Naive thymus-derived CD4-positive, alpha-beta T cell (primary cell): ENCODE measurements at regions of chr14 and their contacts with region 1.

Region 1: GRCh38 chr14:61598980-61599379 is 96.3 kb upstream of the HIF1A start:
- DNase-seq: peak in 3 of 9 donors; percentile 10 to 15 (median 15)
- ATAC-seq: no peak
- H3K4me3 ChIP-seq: no peak overlapping the region
- H3K4me3 Mint-ChIP-seq: peak overlapping the region in 4 of 10 donors; percentile 27 to 55 (median 39)
- H3K27ac ChIP-seq: no peak overlapping the region
- H3K27ac Mint-ChIP-seq: peak overlapping the region in 3 of 9 donors; percentile 53 to 84 (median 71)
- H3K4me1 ChIP-seq: peaks cover 4 to 11% of the 10 kb centered on the region in 2 donors
- H3K4me1 Mint-ChIP-seq: peaks cover 16 to 42% (median 31%) of the 10 kb centered on the region in 7 donors
- H3K27me3 ChIP-seq: no peaks in the 10 kb centered on the region
- H3K27me3 Mint-ChIP-seq: no peaks in the 10 kb centered on the region

Region 2: GRCh38 chr14:61525293-61526011 is 73.5 kb before region 1 on chr14:
- CTCF ChIA-PET with region 1: no interaction called
- POLR2A ChIA-PET with region 1: no interaction called
- intact Hi-C with region 1: loop called in 1 of 2 experiments (anchors 5 kb)
- DNase-seq: peak in 1 of 9 donors; percentile 69
- ATAC-seq: peak; percentile 74
- H3K4me3 ChIP-seq: no peak overlapping the region
- H3K4me3 Mint-ChIP-seq: peak overlapping the region in 3 of 10 donors; percentile 2 to 73 (median 63)
- H3K27ac ChIP-seq: peak overlapping the region; percentile 34
- H3K27ac Mint-ChIP-seq: peak overlapping the region; percentile 69 to 90 (median 81)
- H3K4me1 ChIP-seq: peaks cover 22 to 68% of the 10 kb centered on the region in 2 donors
- H3K4me1 Mint-ChIP-seq: peaks cover 43 to 86% (median 73%) of the 10 kb centered on the region in 7 donors
- H3K27me3 ChIP-seq: no peaks in the 10 kb centered on the region
- H3K27me3 Mint-ChIP-seq: no peaks in the 10 kb centered on the region

Region 3: GRCh38 chr14:61561657-61562276 is 37.2 kb before region 1 on chr14:
- CTCF ChIA-PET with region 1: no interaction called
- POLR2A ChIA-PET with region 1: no interaction called
- intact Hi-C with region 1: no loop called
- DNase-seq: no peak
- ATAC-seq: no peak
- H3K4me3 ChIP-seq: no peak overlapping the region
- H3K4me3 Mint-ChIP-seq: peak overlapping the region in 1 of 10 donors; percentile 1
- H3K27ac ChIP-seq: no peak overlapping the region
- H3K27ac Mint-ChIP-seq: peak overlapping the region in 4 of 9 donors; percentile 10 to 48 (median 39)
- H3K4me1 ChIP-seq: no peaks in the 10 kb centered on the region
- H3K4me1 Mint-ChIP-seq: peaks cover 5 to 67% (median 18%) of the 10 kb centered on the region in 7 donors
- H3K27me3 ChIP-seq: no peaks in the 10 kb centered on the region
- H3K27me3 Mint-ChIP-seq: no peaks in the 10 kb centered on the region

Region 4: GRCh38 chr14:61573748-61574513 is 25.0 kb before region 1 on chr14:
- CTCF ChIA-PET with region 1: no interaction called
- POLR2A ChIA-PET with region 1: interaction called, 3 read pairs
- intact Hi-C with region 1: loop called in 1 of 2 experiments (anchors 2 kb)
- DNase-seq: peak in 6 of 9 donors; percentile 40 to 59 (median 52)
- ATAC-seq: peak; percentile 47
- H3K4me3 ChIP-seq: no peak overlapping the region
- H3K4me3 Mint-ChIP-seq: peak overlapping the region in 9 of 10 donors; percentile 12 to 61 (median 48)
- H3K27ac ChIP-seq: no peak overlapping the region
- H3K27ac Mint-ChIP-seq: peak overlapping the region in 5 of 9 donors; percentile 25 to 57 (median 53)
- H3K4me1 ChIP-seq: peaks cover 0 to 36% of the 10 kb centered on the region in 2 donors
- H3K4me1 Mint-ChIP-seq: peaks cover 39 to 84% (median 75%) of the 10 kb centered on the region in 7 donors
- H3K27me3 ChIP-seq: no peaks in the 10 kb centered on the region
- H3K27me3 Mint-ChIP-seq: peaks cover 0 to 24% (median 0%) of the 10 kb centered on the region in 5 donors

Region 5: DNA sequence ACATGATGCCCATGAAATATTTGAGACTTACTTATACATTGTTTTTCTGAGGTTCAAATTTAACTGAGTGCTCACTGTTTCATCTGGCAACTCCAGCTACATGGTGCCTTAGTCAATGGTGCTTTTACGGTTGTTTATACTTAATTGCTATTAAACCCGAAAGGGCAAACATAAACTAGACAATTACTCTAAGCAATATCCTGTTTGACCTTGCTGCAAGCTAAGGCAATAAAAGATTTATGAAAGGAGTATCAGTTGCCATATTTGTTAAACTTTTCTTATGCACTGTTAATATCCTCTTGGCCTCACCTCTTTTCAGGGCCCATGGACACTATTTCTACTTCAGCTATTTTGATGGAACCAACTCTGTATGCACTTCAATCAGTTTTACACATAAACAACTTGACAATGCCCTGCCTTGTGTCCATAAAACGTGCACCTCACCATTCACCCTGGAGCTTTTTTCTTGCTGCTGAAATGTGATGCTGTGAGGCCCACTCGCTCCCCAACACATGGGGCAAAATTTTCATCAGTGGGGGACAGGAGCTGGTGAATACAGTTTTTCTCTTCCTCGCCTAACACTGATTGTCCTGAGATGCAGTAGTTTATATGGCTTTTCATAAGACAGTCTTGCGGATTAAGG is 32.2 kb after region 1 on chr14:
- CTCF ChIA-PET with region 1: no interaction called
- POLR2A ChIA-PET with region 1: no interaction called
- intact Hi-C with region 1: loop called in 1 of 2 experiments (anchors 5 kb)
- DNase-seq: no peak
- ATAC-seq: no peak
- H3K4me3 ChIP-seq: no peak overlapping the region
- H3K4me3 Mint-ChIP-seq: peak overlapping the region in 1 of 10 donors; percentile 7
- H3K27ac ChIP-seq: no peak overlapping the region
- H3K27ac Mint-ChIP-seq: no peak overlapping the region
- H3K4me1 ChIP-seq: no peaks in the 10 kb centered on the region
- H3K4me1 Mint-ChIP-seq: peaks cover 0 to 15% (median 0%) of the 10 kb centered on the region in 7 donors
- H3K27me3 ChIP-seq: no peaks in the 10 kb centered on the region
- H3K27me3 Mint-ChIP-seq: no peaks in the 10 kb centered on the region

Region 6: GRCh38 chr14:61671082-61671481 is 72.1 kb after region 1 on chr14:
- CTCF ChIA-PET with region 1: no interaction called
- POLR2A ChIA-PET with region 1: no interaction called
- intact Hi-C with region 1: loop called in 1 of 2 experiments (anchors 2 kb)
- DNase-seq: peak in 7 of 9 donors; percentile 67 to 87 (median 82)
- ATAC-seq: peak; percentile 97
- H3K4me3 ChIP-seq: peak overlapping the region; percentile 24
- H3K4me3 Mint-ChIP-seq: peak overlapping the region in 1 of 10 donors; percentile 68
- H3K27ac ChIP-seq: peak overlapping the region; percentile 85
- H3K27ac Mint-ChIP-seq: no peak overlapping the region
- H3K4me1 ChIP-seq: peaks cover 29 to 66% of the 10 kb centered on the region in 2 donors
- H3K4me1 Mint-ChIP-seq: peaks cover 5 to 23% (median 18%) of the 10 kb centered on the region in 7 donors
- H3K27me3 ChIP-seq: no peaks in the 10 kb centered on the region
- H3K27me3 Mint-ChIP-seq: no peaks in the 10 kb centered on the region